K562 (cell line): ENCODE measurements at regions of chr3 and their contacts with region 1.

Region 1: DNA sequence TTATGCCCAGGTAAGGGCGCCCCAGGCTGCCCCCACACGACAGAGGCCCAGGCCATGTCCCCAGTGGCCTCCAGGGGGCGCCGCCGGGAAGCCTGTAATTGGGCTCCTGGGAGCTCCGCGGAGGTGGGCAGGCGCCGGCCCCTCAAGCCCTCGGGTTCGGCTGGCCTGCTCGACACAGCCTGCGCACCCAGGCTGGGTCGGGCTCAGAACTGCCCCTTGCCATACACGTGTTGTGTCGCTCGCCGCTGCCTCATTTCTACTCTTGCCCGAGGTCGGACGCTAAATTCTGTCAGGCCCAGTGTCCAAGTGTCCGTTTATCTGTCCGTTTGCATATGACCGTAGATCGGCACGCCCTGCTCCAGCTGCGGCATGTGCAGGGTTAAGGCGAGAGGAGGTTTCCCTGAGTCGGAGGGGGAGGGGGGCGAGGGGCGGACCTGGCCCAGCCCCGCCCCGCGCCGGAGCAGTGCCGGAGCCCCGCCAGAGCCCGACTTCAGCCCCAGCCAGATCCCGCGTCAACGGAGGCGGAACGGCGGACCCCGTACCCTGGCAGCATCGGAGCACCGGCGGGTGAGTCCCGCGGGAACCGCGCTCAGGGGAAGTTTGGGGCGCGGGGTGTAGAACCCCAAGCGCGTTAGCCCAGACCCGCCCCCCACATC is at the start of gene KLHDC8B:
- DNase-seq: peak; percentile 90 to 94 (median 92)
- ATAC-seq: peak; percentile 94
- H3K4me3 ChIP-seq: peak within 1 kb of the TSS; percentile 72
- H3K27ac ChIP-seq: peak within 1 kb of the TSS; percentile 87
- H3K4me1 ChIP-seq: peaks cover 38 to 57% of the 10 kb centered on the region in 2 experiments
- H3K27me3 ChIP-seq: no peaks in the 10 kb centered on the region
- CTCF ChIP-seq: peak; percentile 82 to 93 (median 90)
- EP300 ChIP-seq: peak; percentile 55; the same call in 1 of the 2 replicates
- POLR2A ChIP-seq: peak; percentile 65; the same call in 1 of the 2 replicates
- RAD21 ChIP-seq: peak; percentile 76 to 79
- polyA plus RNA-seq, gene KLHDC8B: 6.9 TPM

Region 2: DNA sequence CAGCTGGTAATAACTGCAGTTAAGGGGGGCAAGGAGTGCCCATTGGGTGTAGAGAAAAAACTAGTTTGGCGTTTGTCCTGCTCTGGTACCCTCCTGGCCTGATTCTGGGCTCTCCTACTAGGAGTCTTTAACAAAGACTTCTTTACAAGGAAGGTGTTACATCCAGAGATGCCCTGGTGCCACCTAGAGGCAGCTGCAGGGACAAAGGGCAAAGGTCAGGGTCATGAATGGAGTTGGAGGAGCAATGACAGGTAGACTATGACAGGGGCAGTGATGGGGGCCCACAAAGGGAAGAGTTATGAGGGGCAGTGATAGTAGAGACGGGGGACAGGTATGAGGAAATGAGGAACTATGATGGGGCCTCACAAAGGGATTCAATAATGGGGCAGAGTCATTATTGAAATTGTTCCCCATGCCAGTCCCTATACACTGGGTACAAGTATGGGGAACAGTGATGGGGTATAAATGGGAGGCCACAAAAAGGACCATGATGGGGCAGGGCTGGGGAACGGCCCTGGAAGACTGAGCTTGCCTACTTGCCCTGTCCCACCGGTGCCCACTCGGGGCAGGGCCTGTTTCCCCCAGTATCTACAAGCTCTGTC is 13.0 kb before region 1 on chr3:
- CTCF ChIA-PET with region 1: no interaction called
- POLR2A ChIA-PET with region 1: no interaction called
- in situ Hi-C with region 1: no loop called
- intact Hi-C with region 1: no loop called
- DNase-seq: peak in 3 of 4 experiments; percentile 35 to 67 (median 40)
- ATAC-seq: peak; percentile 76
- H3K4me3 ChIP-seq: no peak overlapping the region
- H3K27ac ChIP-seq: no peak overlapping the region
- H3K4me1 ChIP-seq: peaks cover 0 to 3% of the 10 kb centered on the region in 2 experiments; a peak in 2 of 5 replicates
- H3K27me3 ChIP-seq: no peaks in the 10 kb centered on the region
- CTCF ChIP-seq: peak; percentile 54 to 66 (median 64)
- EP300 ChIP-seq: no peak
- POLR2A ChIP-seq: no peak
- RAD21 ChIP-seq: peak; percentile 27 to 63; a peak in 2 of 4 replicates

Region 3: DNA sequence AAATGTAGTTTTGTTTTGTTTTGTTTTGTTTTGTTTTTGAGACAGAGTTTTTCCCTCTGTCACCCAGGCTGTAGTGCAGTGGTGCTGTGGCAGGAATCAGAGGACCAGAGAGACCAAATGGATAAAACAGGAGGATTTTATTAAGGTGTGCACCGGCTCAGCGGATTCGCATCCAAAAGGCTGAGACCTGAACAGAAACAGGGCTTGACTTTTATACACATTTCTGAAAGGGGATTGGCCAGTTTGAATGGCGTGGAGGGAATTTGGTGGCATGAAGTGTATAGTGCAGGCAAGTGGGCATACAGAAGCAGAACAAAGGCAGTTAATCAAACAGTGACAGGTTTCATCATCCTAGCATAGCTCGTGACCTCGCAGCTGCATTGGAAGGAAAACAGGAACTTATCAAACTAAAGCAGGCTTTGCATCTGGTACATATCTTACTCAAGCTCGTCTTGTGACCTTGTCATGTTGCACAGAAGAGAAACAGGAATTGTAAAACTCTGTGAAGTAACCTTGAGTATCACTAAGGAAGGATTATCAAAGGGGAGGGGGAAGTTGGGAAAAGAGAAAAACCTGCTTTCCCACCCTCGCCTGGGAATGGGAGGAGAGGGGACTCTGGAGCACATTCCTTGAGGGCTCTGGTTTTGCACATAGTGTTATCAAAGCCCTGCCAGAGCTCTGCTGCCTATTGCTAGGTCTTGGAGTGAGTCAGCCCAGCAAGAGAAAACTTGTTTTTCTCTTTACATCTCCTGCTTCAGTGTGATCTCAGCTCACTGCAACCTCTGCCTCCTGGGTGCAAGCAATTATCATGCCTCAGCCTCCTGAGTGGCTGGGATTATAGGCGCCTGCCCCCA is 67.3 kb after region 1 on chr3:
- CTCF ChIA-PET with region 1: no interaction called
- POLR2A ChIA-PET with region 1: interaction called, 5 read pairs
- in situ Hi-C with region 1: no loop called
- intact Hi-C with region 1: loop called (anchors 5 kb)
- DNase-seq: peak; percentile 48 to 88 (median 62)
- ATAC-seq: peak; percentile 96
- H3K4me3 ChIP-seq: no peak overlapping the region
- H3K27ac ChIP-seq: peak overlapping the region; percentile 93
- H3K4me1 ChIP-seq: peaks cover 7 to 11% of the 10 kb centered on the region in 2 experiments; a peak in 4 of 5 replicates
- H3K27me3 ChIP-seq: no peaks in the 10 kb centered on the region
- CTCF ChIP-seq: no peak
- EP300 ChIP-seq: peak; percentile 95
- POLR2A ChIP-seq: no peak
- RAD21 ChIP-seq: peak in 1 of 2 experiments; percentile 16; a peak in 1 of 4 replicates

Region 4: DNA sequence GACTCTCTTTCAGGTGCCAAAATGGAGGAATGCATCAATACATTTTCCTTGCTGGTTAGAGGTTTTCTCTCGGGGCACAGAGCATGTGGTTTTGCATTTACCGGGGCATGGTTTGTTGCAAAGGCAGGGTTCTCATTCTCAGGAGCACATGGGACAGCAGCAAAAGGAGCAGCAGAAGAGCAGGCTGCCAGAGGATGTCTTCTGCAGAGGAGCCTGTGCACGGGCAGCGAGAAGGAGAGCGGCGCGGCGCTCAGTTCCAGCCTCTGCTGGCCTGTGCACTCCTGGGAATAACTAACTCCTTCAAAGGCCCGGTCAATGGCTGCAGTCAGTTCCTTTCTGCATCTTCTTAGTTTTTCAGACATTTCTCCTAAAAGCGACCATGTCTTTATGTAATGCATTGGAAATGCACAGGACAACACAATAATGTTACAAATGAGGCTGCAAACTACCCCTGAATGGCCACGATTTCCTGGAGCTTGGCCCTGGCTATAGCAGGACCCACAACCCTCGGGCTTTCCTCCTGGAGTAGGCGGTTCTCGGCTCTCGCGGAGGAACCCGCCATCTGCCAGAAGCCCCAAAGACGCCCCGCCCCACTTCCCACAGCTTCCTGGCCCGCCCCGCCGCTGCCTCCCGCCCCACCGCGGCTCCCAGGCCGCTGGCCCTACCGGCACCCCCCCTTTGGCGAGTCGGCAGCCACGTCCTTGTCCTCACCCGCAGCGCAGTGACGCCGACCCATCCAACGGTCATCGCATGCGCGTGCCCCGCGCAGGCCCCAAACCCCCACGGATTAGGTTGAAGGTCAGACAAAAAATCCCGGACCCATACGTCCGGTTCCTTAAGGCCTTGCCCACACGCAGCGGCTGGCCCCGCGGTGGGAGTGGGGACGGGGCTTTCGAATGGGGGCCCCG is 105.5 kb after region 1 on chr3 and contains the start of gene C3orf62:
- CTCF ChIA-PET with region 1: no interaction called
- POLR2A ChIA-PET with region 1: no interaction called
- in situ Hi-C with region 1: no loop called
- intact Hi-C with region 1: loop called (anchors 5 kb)
- DNase-seq: peak in 1 of 4 experiments; percentile 25
- ATAC-seq: no peak
- H3K4me3 ChIP-seq: no peak within 1 kb of the TSS
- H3K27ac ChIP-seq: no peak within 1 kb of the TSS
- H3K4me1 ChIP-seq: no peaks in the 10 kb centered on the region; a peak in 3 of 5 replicates
- H3K27me3 ChIP-seq: no peaks in the 10 kb centered on the region
- CTCF ChIP-seq: no peak
- EP300 ChIP-seq: no peak
- POLR2A ChIP-seq: no peak
- RAD21 ChIP-seq: no peak
- polyA plus RNA-seq, gene C3orf62: 1.3 to 1.6 TPM

Region 5: GRCh38 chr3:49339945-49340800 is 168.9 kb after region 1 on chr3 and contains the start of gene USP4:
- CTCF ChIA-PET with region 1: no interaction called
- POLR2A ChIA-PET with region 1: no interaction called
- in situ Hi-C with region 1: no loop called
- intact Hi-C with region 1: loop called (anchors 5 kb)
- DNase-seq: peak; percentile 84 to 95 (median 88)
- ATAC-seq: peak; percentile 96
- H3K4me3 ChIP-seq: peak within 1 kb of the TSS; percentile 95
- H3K27ac ChIP-seq: peak within 1 kb of the TSS; percentile 88
- H3K4me1 ChIP-seq: peaks cover 6 to 18% of the 10 kb centered on the region in 2 experiments; a peak in 4 of 5 replicates
- H3K27me3 ChIP-seq: no peaks in the 10 kb centered on the region
- CTCF ChIP-seq: peak; percentile 62 to 75 (median 69)
- EP300 ChIP-seq: peak; percentile 12; the same call in 1 of the 2 replicates
- POLR2A ChIP-seq: peak; percentile 81
- RAD21 ChIP-seq: peak; percentile 64 to 80
- polyA plus RNA-seq, gene USP4: 15.4 to 22.9 TPM

Region 6: GRCh38 chr3:49428697-49429100 is 257.5 kb after region 1 on chr3:
- CTCF ChIA-PET with region 1: no interaction called
- POLR2A ChIA-PET with region 1: no interaction called
- in situ Hi-C with region 1: loop called (anchors 25 kb)
- intact Hi-C with region 1: no loop called
- DNase-seq: no peak
- ATAC-seq: no peak
- H3K4me3 ChIP-seq: peak overlapping the region; percentile 58
- H3K27ac ChIP-seq: peak overlapping the region; percentile 88
- H3K4me1 ChIP-seq: peaks cover 0 to 21% of the 10 kb centered on the region in 2 experiments; a peak in 3 of 5 replicates
- H3K27me3 ChIP-seq: no peaks in the 10 kb centered on the region
- CTCF ChIP-seq: no peak
- EP300 ChIP-seq: no peak
- POLR2A ChIP-seq: no peak
- RAD21 ChIP-seq: no peak

Region 7: DNA sequence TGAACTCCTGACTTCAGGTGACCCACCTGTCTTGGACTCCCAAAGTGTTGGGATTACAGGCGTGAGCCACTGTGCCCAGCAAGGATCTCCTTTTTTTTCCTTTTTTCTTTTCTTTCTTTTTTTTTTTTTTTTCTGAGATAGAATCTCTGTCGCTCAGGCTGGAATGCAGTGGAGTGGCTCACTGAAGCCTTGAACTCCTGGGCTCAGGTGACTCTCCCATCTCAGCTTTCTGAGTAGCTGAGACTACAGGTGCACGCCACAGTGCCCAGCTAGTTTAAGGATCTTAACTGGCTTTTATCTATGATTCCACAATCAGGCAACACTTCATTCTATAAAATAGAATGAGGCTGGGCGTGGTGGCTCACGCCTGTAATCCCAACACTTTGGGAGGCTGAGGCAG is 274.1 kb after region 1 on chr3:
- CTCF ChIA-PET with region 1: no interaction called
- POLR2A ChIA-PET with region 1: interaction called, 4 read pairs
- in situ Hi-C with region 1: loop called (anchors 25 kb)
- intact Hi-C with region 1: loop called (anchors 5 kb)
- DNase-seq: no peak
- ATAC-seq: no peak
- H3K4me3 ChIP-seq: no peak overlapping the region
- H3K27ac ChIP-seq: no peak overlapping the region
- H3K4me1 ChIP-seq: peaks cover 0 to 10% of the 10 kb centered on the region in 2 experiments; a peak in 4 of 5 replicates
- H3K27me3 ChIP-seq: no peaks in the 10 kb centered on the region
- CTCF ChIP-seq: no peak
- EP300 ChIP-seq: no peak
- POLR2A ChIP-seq: no peak
- RAD21 ChIP-seq: no peak